Upper lobe of right lung (tissue), 1 donor: ENCODE measurements at regions of chr3 and their contacts with region 1.

Region 1: GRCh38 chr3:108552267-108553159 is 36.7 kb downstream of the CIP2A start:
- DNase-seq: no peak
- ATAC-seq: peak; percentile 70
- H3K4me3 ChIP-seq: no peak overlapping the region
- H3K27ac ChIP-seq: no peak overlapping the region
- H3K4me1 ChIP-seq: no peaks in the 10 kb centered on the region
- H3K27me3 ChIP-seq: no peaks in the 10 kb centered on the region
- CTCF ChIP-seq: peak; percentile 62

Region 2: DNA sequence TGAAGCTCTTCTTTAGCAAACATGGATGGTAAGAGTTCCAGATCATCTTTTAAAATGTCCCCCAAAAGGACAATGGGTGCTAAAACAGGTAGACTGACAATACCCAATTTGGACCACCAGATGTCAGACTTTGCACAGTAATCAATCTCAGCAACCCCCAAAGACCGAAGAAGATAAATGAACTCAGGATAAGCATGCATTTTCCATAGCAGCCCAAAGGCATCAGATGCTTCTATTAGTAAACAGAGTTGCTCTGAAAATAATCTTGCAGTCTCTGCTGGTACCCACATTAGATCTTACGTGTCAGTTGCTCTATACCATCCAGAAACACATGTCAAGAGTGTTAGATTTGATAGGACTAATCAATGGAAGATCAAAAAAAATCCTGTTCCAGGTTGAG is 62.7 kb before region 1 on chr3:
- intact Hi-C with region 1: loop called (anchors 5 kb)
- DNase-seq: no peak
- ATAC-seq: peak; percentile 78
- H3K4me3 ChIP-seq: no peak overlapping the region
- H3K27ac ChIP-seq: no peak overlapping the region
- H3K4me1 ChIP-seq: no peaks in the 10 kb centered on the region
- H3K27me3 ChIP-seq: no peaks in the 10 kb centered on the region
- CTCF ChIP-seq: peak; percentile 77